Activated CD4-positive, alpha-beta T cell treated with anti-CD3 and anti-CD28 coated beads, Interleukin-2, amount 10 ng/mL, durations not matched to agents 24 days and 14 days (primary cell): ENCODE measurements at regions of chr1 and their contacts with region 1.

Region 1: DNA sequence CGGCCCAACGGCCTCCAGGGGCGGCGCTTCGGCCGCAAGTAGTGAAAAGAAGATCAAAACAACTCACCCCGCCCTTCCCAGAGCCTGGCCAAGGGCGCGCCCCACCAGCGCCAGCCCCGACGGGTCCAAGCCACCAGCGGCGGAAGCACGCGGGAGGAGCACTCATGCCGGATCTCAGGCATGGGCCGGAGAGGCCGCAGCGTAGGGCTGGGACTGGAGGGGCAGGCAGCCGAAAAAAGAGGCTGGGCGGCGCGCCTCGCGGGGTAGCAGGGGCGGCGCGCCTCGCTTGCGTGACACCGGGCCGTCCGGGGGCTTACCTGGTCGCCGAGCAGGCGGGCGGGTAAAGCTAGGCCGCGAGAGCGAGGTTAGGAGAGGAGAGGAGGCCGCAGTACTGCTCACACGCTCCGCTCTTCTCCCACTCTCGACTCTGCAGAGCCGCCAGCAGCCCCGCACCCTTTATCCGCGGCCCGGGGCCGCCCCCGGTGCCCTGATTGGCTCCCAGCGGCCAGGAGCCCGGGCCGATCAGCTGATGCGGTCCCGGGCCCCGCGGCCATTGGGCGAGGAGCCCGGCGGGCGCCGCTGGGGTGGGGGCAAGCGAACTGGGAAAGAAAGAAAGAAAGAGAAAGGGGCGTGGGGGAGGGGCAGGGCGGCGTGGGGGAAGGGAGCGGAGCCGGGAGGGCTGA is at the start of gene GLUL:
- DNase-seq: peak; percentile 94
- H3K4me3 Mint-ChIP-seq: peak within 1 kb of the TSS; percentile 96
- H3K27ac Mint-ChIP-seq: peak within 1 kb of the TSS; percentile 93
- H3K4me1 Mint-ChIP-seq: peaks cover 40% of the 10 kb centered on the region
- H3K27me3 Mint-ChIP-seq: peaks cover 18% of the 10 kb centered on the region
- total RNA-seq, gene GLUL: 78.1 and 80.2 TPM in 2 replicates

Region 2: GRCh38 chr1:181397845-181398244 is 993.7 kb before region 1 on chr1:
- intact Hi-C with region 1: loop called (anchors 10 kb)
- DNase-seq: peak; percentile 81
- H3K4me3 Mint-ChIP-seq: peak overlapping the region; percentile 63
- H3K27ac Mint-ChIP-seq: peak overlapping the region; percentile 87
- H3K4me1 Mint-ChIP-seq: peaks cover 39% of the 10 kb centered on the region
- H3K27me3 Mint-ChIP-seq: no peaks in the 10 kb centered on the region

Region 3: DNA sequence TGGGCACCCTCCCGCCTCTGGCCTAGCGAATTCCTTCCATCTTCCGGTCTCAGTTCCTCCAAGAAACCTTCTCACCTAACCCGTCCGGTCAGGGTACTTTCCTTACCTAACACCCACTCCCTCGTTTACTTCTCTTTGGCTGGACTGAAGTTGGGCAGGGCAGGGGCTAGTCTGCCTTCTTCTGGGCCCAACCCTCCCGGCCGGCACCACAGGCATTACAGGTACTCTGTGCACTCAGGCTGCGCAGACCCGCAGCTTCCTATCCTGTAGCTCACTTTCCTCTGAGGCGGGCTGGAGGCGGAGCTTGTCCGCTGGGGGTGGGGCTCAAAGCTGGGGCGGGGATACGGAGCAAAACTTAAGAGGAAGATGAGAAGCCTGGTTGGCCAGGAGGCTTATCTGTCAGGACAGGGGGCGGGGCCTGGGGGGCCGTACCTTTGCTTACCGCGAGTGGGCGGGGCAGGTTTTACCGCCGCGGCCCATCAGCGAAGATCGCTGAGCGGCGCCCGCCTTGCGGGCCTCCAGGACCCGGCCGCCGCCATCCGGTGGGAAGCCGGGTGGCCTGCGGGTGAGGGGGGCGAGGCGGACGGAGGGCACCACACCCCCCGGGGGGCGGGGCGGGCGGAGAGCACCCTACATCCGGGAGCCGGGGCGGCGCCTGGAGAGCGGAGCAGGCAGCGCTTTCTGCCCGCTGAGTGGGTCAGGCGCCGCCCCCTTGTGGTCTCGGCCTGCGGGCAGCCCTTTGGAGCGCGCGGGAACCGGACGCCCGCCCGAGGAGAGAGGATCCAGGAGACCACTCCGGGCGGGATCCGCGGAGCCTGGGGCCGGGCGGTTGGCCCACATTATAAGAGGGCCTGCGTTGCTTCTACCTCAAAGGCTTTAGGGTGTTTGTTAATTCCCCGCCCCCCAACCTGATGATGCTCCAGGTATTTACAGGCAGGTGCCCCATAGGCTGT is 361.8 kb before region 1 on chr1:
- intact Hi-C with region 1: loop called (anchors 2 kb)
- DNase-seq: peak; percentile 99
- H3K4me3 Mint-ChIP-seq: peak overlapping the region; percentile 99
- H3K27ac Mint-ChIP-seq: peak overlapping the region; percentile 99
- H3K4me1 Mint-ChIP-seq: peaks cover 14% of the 10 kb centered on the region
- H3K27me3 Mint-ChIP-seq: no peaks in the 10 kb centered on the region

Region 4: GRCh38 chr1:182143154-182143657 is 248.3 kb before region 1 on chr1:
- intact Hi-C with region 1: loop called (anchors 1 kb)
- DNase-seq: peak; percentile 96
- H3K4me3 Mint-ChIP-seq: no peak overlapping the region
- H3K27ac Mint-ChIP-seq: no peak overlapping the region
- H3K4me1 Mint-ChIP-seq: peaks cover 25% of the 10 kb centered on the region
- H3K27me3 Mint-ChIP-seq: peaks cover 6% of the 10 kb centered on the region

Region 5: GRCh38 chr1:182301467-182302198 is 89.9 kb before region 1 on chr1:
- intact Hi-C with region 1: loop called (anchors 5 kb)
- DNase-seq: peak; percentile 62
- H3K4me3 Mint-ChIP-seq: no peak overlapping the region
- H3K27ac Mint-ChIP-seq: peak overlapping the region; percentile 83
- H3K4me1 Mint-ChIP-seq: peaks cover 30% of the 10 kb centered on the region
- H3K27me3 Mint-ChIP-seq: no peaks in the 10 kb centered on the region